ENCODE measurements at regions of chr15 and their contacts with region 1.

Region 1: GRCh38 chr15:75758071-75758872 is 45.6 kb upstream of the CSPG4 start:
- DNase-seq: peak; percentile 91 to 93
- H3K4me3 ChIP-seq: peak overlapping the region; percentile 50
- H3K4me3 Mint-ChIP-seq: peak overlapping the region; percentile 96
- H3K27ac Mint-ChIP-seq: peak overlapping the region; percentile 97
- H3K4me1 ChIP-seq: peaks cover 8% of the 10 kb centered on the region; the same call in 1 of the 2 replicates
- H3K4me1 Mint-ChIP-seq: peaks cover 6% of the 10 kb centered on the region
- H3K27me3 ChIP-seq: no peaks in the 10 kb centered on the region
- H3K27me3 Mint-ChIP-seq: no peaks in the 10 kb centered on the region
- CTCF ChIP-seq: peak in 1 of 2 experiments; percentile 32

Region 2: DNA sequence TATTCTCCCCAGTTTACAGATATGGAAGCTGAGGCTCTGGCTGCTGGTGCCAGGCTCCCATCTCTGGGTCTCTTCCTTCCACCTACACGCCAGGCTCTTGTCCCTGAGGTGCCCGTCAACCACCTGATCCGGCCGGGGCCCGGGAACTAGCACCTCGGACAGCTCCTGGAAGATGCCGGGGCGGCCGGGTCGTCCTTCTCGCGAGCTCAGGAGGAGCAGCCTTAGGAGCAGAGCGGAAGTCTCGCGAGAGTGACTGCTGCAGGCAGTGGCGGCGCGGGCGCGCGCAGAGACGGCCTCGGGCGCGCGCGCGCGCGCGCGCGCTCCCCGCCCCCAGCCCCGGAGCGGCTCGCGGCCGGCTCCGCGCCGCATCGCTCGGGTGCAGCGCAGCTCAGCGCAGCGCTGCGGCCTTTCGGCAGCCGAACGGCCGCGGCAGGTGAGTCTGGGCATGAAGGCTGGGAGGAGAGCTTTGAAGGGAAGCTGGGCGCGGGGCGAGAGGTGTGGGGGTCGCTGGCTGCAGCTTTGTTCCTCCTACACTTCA is 763.0 kb before region 1 on chr15 and contains the start of gene SCAMP5:
- CTCF ChIA-PET with region 1: no interaction called
- POLR2A ChIA-PET with region 1: no interaction called
- intact Hi-C with region 1: no loop called
- DNase-seq: peak; percentile 95 to 97
- H3K4me3 ChIP-seq: peak within 1 kb of the TSS; percentile 75
- H3K4me3 Mint-ChIP-seq: peak within 1 kb of the TSS; percentile 67
- H3K27ac Mint-ChIP-seq: no peak within 1 kb of the TSS
- H3K4me1 ChIP-seq: 0 out of 2 replicates have a peak, but pooled peaks cover 2% of the 10 kb centered on the region
- H3K4me1 Mint-ChIP-seq: peaks cover 10% of the 10 kb centered on the region
- H3K27me3 ChIP-seq: peaks cover 1% of the 10 kb centered on the region; the same call in 1 of the 2 replicates
- H3K27me3 Mint-ChIP-seq: peaks cover 9% of the 10 kb centered on the region
- CTCF ChIP-seq: no peak
- total RNA-seq, gene SCAMP5: 9.2 and 11.8 TPM in 2 replicates

Region 3: GRCh38 chr15:75738647-75739331 is 19.5 kb before region 1 on chr15:
- CTCF ChIA-PET with region 1: no interaction called
- POLR2A ChIA-PET with region 1: interaction called, 4 read pairs
- intact Hi-C with region 1: loop called (anchors 1 kb)
- DNase-seq: peak; percentile 95 to 96
- H3K4me3 ChIP-seq: peak overlapping the region; percentile 88
- H3K4me3 Mint-ChIP-seq: peak overlapping the region; percentile 98
- H3K27ac Mint-ChIP-seq: peak overlapping the region; percentile 88
- H3K4me1 ChIP-seq: no peaks in the 10 kb centered on the region
- H3K4me1 Mint-ChIP-seq: peaks cover 12% of the 10 kb centered on the region
- H3K27me3 ChIP-seq: no peaks in the 10 kb centered on the region
- H3K27me3 Mint-ChIP-seq: no peaks in the 10 kb centered on the region
- CTCF ChIP-seq: no peak

Region 4: DNA sequence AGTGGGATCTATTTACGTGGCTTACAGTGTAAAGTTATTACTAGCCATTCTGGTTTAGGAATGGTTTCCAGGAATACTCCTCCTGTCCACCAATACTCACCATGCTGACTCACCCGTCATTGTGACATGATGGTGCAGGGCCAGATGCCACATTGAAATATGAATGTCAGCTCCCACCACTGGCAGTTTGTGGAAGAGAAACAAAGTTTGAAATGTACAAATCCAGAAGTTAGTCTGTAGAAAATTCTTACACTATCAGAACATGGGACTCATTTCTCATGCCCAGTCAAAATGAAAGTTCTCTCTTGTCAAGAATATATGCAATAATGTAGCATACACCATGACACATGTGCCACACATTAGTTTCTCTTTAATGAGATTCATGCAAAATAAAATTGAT is 1327.0 kb after region 1 on chr15:
- CTCF ChIA-PET with region 1: no interaction called
- POLR2A ChIA-PET with region 1: no interaction called
- intact Hi-C with region 1: no loop called
- DNase-seq: no peak
- H3K4me3 ChIP-seq: no peak overlapping the region
- H3K4me3 Mint-ChIP-seq: no peak overlapping the region
- H3K27ac Mint-ChIP-seq: no peak overlapping the region
- H3K4me1 ChIP-seq: no peaks in the 10 kb centered on the region
- H3K4me1 Mint-ChIP-seq: no peaks in the 10 kb centered on the region
- H3K27me3 ChIP-seq: no peaks in the 10 kb centered on the region
- H3K27me3 Mint-ChIP-seq: no peaks in the 10 kb centered on the region
- CTCF ChIP-seq: no peak